Activated CD4-positive, alpha-beta T cell treated with anti-CD3 and anti-CD28 coated beads, Interleukin-2, amount 10 ng/mL, durations not matched to agents 24 days and 14 days (primary cell): ENCODE measurements at regions of chr10 and their contacts with region 1.

Region 1: DNA sequence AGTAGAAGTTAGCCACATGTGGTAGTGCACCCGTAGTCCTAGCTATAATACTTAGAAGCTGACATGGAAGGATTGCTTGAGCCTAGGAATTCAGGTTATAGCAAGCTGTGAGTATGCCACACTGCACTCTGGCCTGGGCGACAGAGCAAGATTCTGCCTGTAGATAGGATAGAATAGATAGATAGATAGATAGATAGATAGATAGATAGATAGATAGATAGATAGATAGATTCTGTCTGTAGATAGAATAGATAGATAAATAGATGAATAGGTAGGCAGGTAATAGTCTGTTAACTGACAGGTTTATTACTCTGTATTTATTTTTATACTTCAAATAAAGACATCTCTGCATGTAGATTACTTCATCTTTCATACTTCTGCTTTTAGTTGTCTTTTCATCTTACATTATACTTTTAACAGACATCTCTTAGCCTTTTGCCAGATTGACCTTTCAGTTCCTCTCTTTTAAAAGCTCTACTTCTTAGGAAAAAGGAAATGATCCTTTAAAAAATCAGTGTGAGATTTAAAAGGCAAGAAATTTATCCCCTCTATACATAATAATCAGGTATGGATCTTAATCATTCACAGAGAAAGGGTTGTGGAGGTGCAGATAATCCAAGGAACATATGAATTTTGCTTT is 31.8 kb downstream of the CCAR1 start:
- DNase-seq: no peak
- H3K4me3 Mint-ChIP-seq: no peak overlapping the region
- H3K27ac Mint-ChIP-seq: no peak overlapping the region
- H3K4me1 Mint-ChIP-seq: no peaks in the 10 kb centered on the region
- H3K27me3 Mint-ChIP-seq: no peaks in the 10 kb centered on the region

Region 2: DNA sequence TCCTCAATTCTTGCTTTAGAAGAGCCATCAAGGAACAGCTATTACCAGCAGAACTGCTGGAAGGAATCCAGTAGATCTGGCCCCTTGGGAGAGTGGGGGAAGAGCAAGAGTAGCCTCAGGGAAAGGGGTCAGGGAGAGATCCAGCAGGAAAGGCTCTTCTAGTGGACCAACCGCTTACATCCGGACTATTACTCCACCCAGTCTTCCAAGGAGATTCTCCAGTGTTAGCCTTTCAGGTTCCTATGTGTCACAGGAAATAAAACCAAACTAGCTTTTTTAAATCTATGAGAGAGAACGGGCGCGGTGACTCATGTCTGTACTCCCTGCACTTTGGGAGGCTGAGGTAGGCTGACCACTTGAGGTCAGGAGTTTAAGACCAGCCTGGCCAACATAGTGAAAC is 158.4 kb before region 1 on chr10:
- intact Hi-C with region 1: no loop called
- DNase-seq: no peak
- H3K4me3 Mint-ChIP-seq: no peak overlapping the region
- H3K27ac Mint-ChIP-seq: no peak overlapping the region
- H3K4me1 Mint-ChIP-seq: peaks cover 2% of the 10 kb centered on the region
- H3K27me3 Mint-ChIP-seq: peaks cover 3% of the 10 kb centered on the region

Region 3: GRCh38 chr10:68811314-68812009 is 58.6 kb after region 1 on chr10:
- intact Hi-C with region 1: no loop called
- DNase-seq: no peak
- H3K4me3 Mint-ChIP-seq: no peak overlapping the region
- H3K27ac Mint-ChIP-seq: no peak overlapping the region
- H3K4me1 Mint-ChIP-seq: no peaks in the 10 kb centered on the region
- H3K27me3 Mint-ChIP-seq: no peaks in the 10 kb centered on the region

Region 4: DNA sequence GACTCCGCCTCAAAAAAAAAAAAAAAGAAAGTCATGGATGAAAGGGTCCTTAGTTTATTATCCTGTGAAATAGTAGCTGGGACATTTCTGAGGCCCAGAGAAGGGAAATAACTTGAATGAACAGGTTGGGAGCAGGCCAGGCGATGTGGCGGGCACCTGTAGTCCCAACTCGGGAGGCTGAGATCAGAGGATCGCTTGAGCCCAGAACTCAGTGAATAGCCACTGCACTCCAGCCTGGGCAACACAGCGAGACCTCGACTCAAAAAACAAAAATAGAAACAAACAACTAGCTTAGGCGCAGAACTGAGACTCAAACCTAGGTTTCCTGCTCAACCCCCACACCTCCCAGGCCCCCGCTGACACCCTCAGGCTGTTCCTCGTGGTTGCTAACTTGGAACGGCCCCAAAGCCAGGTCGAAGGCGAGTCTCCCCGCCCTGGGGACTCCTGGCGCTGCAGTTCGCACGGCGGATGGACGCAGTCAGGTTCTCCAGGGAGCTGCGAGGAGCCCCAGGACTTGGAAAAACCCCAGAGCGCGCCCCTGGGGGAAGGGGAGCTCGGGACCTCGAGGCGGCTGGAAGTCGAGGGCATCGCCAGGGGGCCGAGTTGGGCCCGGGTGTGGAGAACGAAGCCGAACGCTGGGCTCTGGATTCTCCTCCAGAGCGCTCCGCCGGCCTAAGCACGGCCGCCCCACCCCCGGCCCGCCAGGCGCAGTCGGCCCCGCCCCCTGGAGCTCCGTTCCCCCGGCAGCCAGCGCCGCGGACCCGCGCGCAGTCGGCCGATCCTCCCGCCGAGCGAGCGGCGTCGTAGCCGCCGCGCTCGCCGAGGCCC is 74.1 kb after region 1 on chr10 and contains the start of gene STOX1:
- intact Hi-C with region 1: no loop called
- DNase-seq: peak; percentile 87
- H3K4me3 Mint-ChIP-seq: peak within 1 kb of the TSS; percentile 80
- H3K27ac Mint-ChIP-seq: no peak within 1 kb of the TSS
- H3K4me1 Mint-ChIP-seq: peaks cover 5% of the 10 kb centered on the region
- H3K27me3 Mint-ChIP-seq: peaks cover 23% of the 10 kb centered on the region
- total RNA-seq, gene STOX1: 0.76 and 0.82 TPM in 2 replicates

Region 5: DNA sequence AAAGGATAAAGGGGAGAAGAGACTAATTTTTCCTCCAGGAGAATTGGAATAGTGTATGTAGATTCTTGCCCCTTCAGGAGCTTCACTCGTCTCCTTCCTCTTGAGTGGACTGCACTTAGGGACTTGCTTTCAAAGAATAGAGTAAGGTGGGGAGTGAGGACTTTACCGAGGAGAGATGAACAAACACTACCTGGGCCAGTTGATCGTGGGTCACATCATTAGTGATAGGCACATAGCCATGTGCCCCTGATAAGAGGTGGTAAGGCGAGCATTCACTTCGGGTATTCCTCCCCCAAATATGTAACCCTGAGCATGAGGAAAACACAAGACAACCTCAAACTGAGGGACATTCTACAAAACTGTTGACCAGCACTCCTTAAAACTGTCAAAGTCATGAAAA is 221.1 kb after region 1 on chr10:
- intact Hi-C with region 1: loop called (anchors 10 kb)
- DNase-seq: no peak
- H3K4me3 Mint-ChIP-seq: no peak overlapping the region
- H3K27ac Mint-ChIP-seq: no peak overlapping the region
- H3K4me1 Mint-ChIP-seq: peaks cover 15% of the 10 kb centered on the region
- H3K27me3 Mint-ChIP-seq: no peaks in the 10 kb centered on the region